Activated T-helper 1 cell treated with anti-CD3 and anti-CD28 coated beads, Interleukin-12 subunit alpha, Interleukin-12 subunit beta, Interleukin-2, Interleukin-4 antibody, amounts not matched to agents 30 ng/mL and 10 ng/mL and 1 ng/mL, durations not matched to agents 14 hours and 24 hours and 36 hours (primary cell): ENCODE measurements at regions of chr11 and their contacts with region 1.

Region 1: DNA sequence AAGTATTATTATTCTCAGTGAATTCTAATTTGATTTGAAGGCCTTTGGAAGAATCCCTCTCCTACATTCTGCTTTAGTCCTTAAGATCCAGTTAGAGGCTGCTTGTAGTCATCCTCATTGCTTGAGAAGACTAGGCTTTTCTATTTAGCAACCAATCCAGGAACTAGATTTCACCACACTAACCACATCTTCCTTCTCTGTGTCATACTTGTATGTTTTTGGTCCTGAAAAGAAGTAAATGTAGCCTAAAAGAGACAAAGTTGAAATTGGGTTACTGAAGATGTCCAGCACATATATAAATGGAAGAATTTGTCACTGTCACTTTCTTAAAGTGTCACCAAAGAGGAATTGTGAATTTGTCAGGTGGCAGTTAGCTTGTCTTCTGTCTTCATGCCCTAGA is 46.6 kb upstream of the MMP7 start:
- DNase-seq: no peak
- H3K4me3 Mint-ChIP-seq: no peak overlapping the region
- H3K27ac Mint-ChIP-seq: peak overlapping the region; percentile 2
- H3K4me1 Mint-ChIP-seq: peaks cover 46% of the 10 kb centered on the region
- H3K27me3 Mint-ChIP-seq: no peaks in the 10 kb centered on the region

Region 2: DNA sequence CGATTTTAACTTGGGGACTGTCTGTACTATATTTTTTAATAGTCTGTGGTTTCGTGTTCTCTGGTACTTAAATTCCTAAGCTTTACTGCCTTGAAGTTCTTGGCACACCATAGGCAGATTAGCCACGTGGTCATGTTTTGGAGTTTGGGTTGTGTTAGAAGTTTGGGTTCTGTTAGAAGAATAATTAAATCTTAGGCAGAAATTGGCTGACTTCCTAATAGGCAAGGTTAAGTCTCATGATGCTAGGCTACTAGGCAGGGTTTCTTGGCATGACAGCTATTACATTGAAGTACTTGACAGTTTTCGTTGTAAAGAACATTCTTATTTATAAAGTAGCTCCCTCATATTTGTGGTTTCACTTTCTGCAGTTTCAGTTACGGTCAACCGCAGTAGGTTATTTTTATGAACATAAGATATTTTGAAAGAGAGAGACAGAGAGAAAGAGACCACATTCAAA is 16.6 kb before region 1 on chr11:
- intact Hi-C with region 1: loop called (anchors 1 kb)
- DNase-seq: no peak
- H3K4me3 Mint-ChIP-seq: peak overlapping the region; percentile 63
- H3K27ac Mint-ChIP-seq: no peak overlapping the region
- H3K4me1 Mint-ChIP-seq: peaks cover 50% of the 10 kb centered on the region
- H3K27me3 Mint-ChIP-seq: peaks cover 2% of the 10 kb centered on the region

Region 3: DNA sequence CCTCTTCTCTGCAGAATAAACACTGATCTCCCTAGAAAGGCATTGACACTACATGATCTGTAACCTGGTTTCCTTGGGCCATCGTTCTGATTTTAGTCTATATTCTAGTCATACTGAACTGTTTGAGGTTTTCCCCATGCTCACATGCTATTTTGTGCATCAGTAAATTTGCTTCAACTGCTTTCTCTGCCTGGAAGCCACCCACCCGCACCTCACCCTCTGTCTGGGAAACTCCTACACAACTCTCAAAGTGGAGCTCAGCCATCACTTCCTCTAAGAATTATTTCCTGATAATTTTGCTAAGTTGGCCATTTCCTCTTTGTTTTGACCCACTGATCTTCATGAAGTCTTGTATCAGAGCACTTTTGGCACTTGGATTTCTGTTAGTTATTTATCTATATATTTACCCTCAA is 11.9 kb after region 1 on chr11:
- intact Hi-C with region 1: loop called (anchors 1 kb)
- DNase-seq: no peak
- H3K4me3 Mint-ChIP-seq: no peak overlapping the region
- H3K27ac Mint-ChIP-seq: peak overlapping the region; percentile 74
- H3K4me1 Mint-ChIP-seq: peaks cover 49% of the 10 kb centered on the region
- H3K27me3 Mint-ChIP-seq: no peaks in the 10 kb centered on the region

Region 4: GRCh38 chr11:103488031-103488461 is 910.9 kb after region 1 on chr11:
- intact Hi-C with region 1: loop called (anchors 5 kb)
- DNase-seq: no peak
- H3K4me3 Mint-ChIP-seq: no peak overlapping the region
- H3K27ac Mint-ChIP-seq: peak overlapping the region; percentile 12
- H3K4me1 Mint-ChIP-seq: peaks cover 15% of the 10 kb centered on the region
- H3K27me3 Mint-ChIP-seq: no peaks in the 10 kb centered on the region